ENCODE measurements at regions of chr3 and their contacts with region 1.

Region 1: GRCh38 chr3:81302045-81302444 is 459.4 kb downstream of the GBE1 start:
- DNase-seq: peak; percentile 71
- H3K4me3 ChIP-seq: no peak overlapping the region
- H3K27ac ChIP-seq: no peak overlapping the region
- H3K4me1 ChIP-seq: no peaks in the 10 kb centered on the region
- H3K27me3 ChIP-seq: no peaks in the 10 kb centered on the region
- CTCF ChIP-seq: peak; percentile 53 to 57
- POLR2A ChIP-seq: no peak

Region 2: GRCh38 chr3:81289676-81290075 is 12.4 kb before region 1 on chr3:
- CTCF ChIA-PET with region 1: interaction called, 14 read pairs
- POLR2A ChIA-PET with region 1: no interaction called
- dilution Hi-C with region 1: no loop called
- intact Hi-C with region 1: no loop called
- DNase-seq: peak; percentile 36
- H3K4me3 ChIP-seq: no peak overlapping the region
- H3K27ac ChIP-seq: no peak overlapping the region
- H3K4me1 ChIP-seq: no peaks in the 10 kb centered on the region
- H3K27me3 ChIP-seq: no peaks in the 10 kb centered on the region
- CTCF ChIP-seq: no peak
- POLR2A ChIP-seq: no peak

Region 3: DNA sequence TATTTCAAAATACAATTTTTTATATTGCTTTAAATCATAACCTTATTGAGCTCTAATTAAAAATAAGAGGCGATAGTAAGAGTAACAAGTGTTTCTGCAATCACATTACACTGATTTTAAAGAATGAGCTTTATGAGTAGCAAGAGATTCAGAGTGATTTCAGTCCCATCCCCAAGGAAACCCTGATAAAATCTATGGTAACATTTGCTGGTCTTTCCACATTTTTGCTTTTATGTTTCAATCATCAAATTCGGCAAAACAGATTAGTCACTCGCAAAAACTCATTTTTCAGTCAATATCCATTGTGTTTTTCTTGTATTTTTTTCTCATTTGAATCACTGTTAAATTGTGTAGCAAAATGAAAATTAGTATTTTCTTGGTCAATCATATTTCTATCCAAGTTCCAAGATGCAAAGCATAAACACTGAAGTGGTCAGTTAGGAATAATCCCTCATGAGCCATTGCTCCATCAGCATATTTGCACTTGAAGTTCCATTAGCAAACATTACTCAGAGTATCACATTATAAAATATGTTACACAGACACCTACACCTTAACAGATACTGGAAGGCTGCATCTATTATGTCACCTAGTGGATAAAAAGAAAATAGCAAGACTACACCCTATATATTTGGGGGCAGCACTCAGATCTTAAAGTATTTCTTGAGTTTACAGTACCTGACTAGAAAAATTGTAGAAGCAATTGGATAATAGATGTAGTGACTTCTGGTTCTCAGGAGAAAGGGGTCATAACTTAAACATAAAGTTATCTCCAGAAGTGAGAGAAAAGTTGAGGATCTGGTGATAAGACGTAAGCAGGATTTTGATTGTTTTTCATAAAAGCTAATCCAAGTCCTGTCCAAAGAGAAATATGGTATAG is 36.9 kb after region 1 on chr3:
- CTCF ChIA-PET with region 1: interaction called, 121 read pairs
- POLR2A ChIA-PET with region 1: interaction called, 5 read pairs
- dilution Hi-C with region 1: no loop called
- intact Hi-C with region 1: loop called (anchors 1 kb)
- DNase-seq: peak; percentile 48
- H3K4me3 ChIP-seq: no peak overlapping the region
- H3K27ac ChIP-seq: no peak overlapping the region
- H3K4me1 ChIP-seq: no peaks in the 10 kb centered on the region
- H3K27me3 ChIP-seq: no peaks in the 10 kb centered on the region
- CTCF ChIP-seq: peak; percentile 28 to 38
- POLR2A ChIP-seq: no peak

Region 4: DNA sequence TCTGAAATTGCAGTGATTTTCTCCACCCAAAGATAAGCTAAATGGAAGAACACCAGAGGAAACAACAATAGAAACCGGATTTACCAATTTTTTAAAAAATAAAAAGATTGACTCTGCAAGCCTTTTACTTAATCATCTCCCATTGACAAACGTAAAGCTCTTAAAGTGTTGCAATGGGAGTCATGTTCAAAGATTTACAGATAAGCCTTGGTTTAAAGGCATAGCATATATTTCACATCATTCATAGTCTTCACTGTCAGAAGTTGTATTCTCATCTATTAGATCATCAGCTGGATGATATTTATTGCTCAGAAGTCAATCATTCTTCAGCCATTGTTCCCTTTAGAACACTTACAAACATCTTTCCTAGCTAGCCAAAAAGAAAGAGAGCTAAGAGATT is 61.8 kb after region 1 on chr3:
- CTCF ChIA-PET with region 1: interaction called, 10 read pairs
- POLR2A ChIA-PET with region 1: no interaction called
- dilution Hi-C with region 1: no loop called
- intact Hi-C with region 1: no loop called
- DNase-seq: no peak
- H3K4me3 ChIP-seq: peak overlapping the region in 1 of 3 experiments; percentile 48
- H3K27ac ChIP-seq: peak overlapping the region; percentile 57
- H3K4me1 ChIP-seq: peaks cover 17% of the 10 kb centered on the region
- H3K27me3 ChIP-seq: no peaks in the 10 kb centered on the region
- CTCF ChIP-seq: no peak
- POLR2A ChIP-seq: no peak

Region 5: DNA sequence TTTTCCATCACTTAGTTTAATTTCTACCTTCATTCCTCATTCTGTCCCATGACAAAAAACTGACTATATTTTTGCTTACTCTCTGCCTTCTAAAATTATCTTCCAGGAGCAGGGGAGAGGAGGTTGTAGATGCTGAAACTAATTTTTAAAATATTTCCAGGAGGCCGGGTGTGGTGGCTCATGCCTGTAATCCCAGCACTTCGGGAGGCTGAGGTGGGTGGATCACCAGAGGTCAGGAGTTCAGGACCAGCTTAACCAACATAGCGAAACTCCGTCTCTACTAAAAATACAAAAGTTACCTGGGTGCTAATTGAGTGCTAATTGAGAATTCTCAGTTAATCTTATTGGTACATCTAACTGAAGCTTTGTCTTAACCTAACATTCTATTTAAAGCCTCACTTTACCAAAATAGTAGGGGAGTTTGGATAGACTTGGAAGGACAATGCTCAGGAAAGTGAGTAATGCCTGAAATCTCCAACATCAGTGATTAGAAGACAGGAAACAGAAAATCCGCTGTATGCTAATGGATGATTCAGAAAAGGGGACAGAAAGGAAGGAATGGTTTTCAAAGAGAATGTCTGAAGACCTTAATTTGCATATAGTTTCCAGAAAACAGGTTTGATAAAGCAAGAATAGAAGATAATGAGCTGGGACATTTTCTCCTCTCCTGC is 123.3 kb after region 1 on chr3:
- CTCF ChIA-PET with region 1: interaction called, 23 read pairs
- POLR2A ChIA-PET with region 1: no interaction called
- dilution Hi-C with region 1: no loop called
- intact Hi-C with region 1: loop called (anchors 2 kb)
- DNase-seq: peak; percentile 89
- H3K4me3 ChIP-seq: peak overlapping the region in 1 of 3 experiments; percentile 38
- H3K27ac ChIP-seq: peak overlapping the region; percentile 97
- H3K4me1 ChIP-seq: peaks cover 27% of the 10 kb centered on the region
- H3K27me3 ChIP-seq: no peaks in the 10 kb centered on the region
- CTCF ChIP-seq: no peak
- POLR2A ChIP-seq: no peak

Region 6: DNA sequence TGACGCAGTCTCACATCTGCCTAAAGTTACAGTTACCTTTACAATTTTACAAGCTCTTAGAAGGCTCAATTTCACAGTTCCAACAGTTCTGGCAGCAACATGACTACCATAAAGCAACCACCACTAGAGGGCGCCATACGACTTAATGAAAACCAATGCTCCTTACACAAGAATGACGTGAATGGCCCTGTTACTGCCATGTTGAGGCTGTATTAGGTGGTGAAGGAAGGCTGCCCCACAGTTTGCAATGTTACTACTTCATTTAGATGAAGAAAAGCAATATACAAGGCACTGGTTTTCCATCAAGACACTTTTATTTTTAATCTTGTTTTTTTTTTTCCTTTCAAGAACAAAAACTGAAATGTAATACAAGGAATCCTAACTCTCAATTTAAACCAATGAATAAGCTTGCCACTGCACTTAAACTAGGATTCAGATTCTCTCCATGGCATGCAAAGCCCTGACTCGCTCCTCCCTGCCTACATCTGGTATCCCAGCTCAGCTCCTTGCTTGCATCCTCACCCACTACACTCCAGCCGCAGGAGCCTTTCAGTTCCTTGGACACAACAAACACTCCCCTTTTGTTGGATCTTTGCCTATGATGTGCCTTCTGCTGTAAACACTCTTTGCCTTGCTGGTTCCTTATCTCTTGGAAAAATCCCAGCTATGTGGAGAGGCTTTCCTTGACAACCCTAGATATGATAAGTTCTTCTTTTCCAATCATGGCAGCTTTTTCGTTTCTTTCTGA is 188.7 kb after region 1 on chr3:
- CTCF ChIA-PET with region 1: interaction called, 20 read pairs
- POLR2A ChIA-PET with region 1: no interaction called
- dilution Hi-C with region 1: no loop called
- intact Hi-C with region 1: loop called (anchors 2 kb)
- DNase-seq: peak; percentile 80
- H3K4me3 ChIP-seq: no peak overlapping the region
- H3K27ac ChIP-seq: no peak overlapping the region
- H3K4me1 ChIP-seq: peaks cover 5% of the 10 kb centered on the region
- H3K27me3 ChIP-seq: no peaks in the 10 kb centered on the region
- CTCF ChIP-seq: peak; percentile 75 to 80
- POLR2A ChIP-seq: no peak

Region 7: DNA sequence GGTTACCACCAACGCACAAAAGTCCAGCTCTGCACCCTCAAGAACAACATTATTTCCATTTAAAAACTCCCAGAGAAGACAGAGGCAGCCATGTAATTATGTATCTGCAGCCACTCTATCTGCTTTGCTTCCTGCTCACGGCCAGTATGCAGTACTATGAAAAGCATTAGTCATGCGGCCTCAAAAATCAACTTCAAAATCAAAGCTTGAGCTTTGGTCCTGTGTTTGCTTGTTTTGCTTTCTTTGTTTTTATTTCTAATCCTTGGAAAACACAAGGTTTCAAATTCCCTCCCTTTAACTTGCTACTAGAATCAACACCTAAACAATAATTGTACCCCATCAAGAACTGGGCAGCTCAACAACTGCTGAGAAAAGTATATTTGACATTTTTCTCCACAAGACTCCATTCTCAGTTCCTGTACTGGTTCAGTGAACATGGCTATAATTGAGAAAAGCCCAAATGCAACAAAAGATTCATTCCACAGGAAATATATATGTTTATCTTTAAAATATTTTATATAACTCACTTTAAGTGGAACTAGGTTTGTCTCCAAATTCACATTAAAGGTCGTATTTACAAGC is 421.8 kb after region 1 on chr3:
- CTCF ChIA-PET with region 1: interaction called, 5 read pairs
- POLR2A ChIA-PET with region 1: no interaction called
- dilution Hi-C with region 1: no loop called
- intact Hi-C with region 1: loop called (anchors 10 kb)
- DNase-seq: peak; percentile 78
- H3K4me3 ChIP-seq: no peak overlapping the region
- H3K27ac ChIP-seq: peak overlapping the region; percentile 84
- H3K4me1 ChIP-seq: peaks cover 50% of the 10 kb centered on the region
- H3K27me3 ChIP-seq: no peaks in the 10 kb centered on the region
- CTCF ChIP-seq: no peak
- POLR2A ChIP-seq: no peak